ENCODE measurements at regions of chr17 and their contacts with region 1.

Region 1: DNA sequence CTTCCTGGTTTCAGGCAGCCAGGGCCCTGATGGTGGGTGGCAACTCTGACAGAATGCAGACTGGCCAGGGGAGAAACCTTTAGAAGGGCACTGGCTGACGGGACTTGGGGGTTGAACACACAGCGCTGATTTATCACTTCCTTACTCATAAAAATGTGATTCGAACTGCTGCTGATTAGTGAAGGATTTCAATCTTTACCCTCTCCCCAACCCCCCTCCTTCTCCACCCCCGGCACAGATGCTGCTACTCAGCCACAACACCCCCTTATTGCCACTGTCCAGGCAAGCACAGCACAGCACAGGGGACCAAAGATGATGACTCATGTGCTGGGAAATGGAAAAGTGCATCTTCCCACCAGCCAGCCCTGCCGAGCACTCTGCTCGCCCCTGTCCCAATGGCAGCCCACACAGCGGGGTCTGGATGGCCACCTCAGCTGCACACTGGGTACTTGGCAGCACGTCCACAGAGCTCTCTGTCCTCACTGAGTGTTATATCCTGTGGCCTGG is 70.1 kb downstream of the SMG6 start:
- DNase-seq: no peak
- ATAC-seq: no peak

Region 2: GRCh38 chr17:2064980-2065785 is 168.3 kb before region 1 on chr17:
- intact Hi-C with region 1: loop called in 1 of 2 experiments (anchors 5 kb)
- DNase-seq: peak in 1 of 2 donors; percentile 58
- ATAC-seq: peak; percentile 52

Region 3: DNA sequence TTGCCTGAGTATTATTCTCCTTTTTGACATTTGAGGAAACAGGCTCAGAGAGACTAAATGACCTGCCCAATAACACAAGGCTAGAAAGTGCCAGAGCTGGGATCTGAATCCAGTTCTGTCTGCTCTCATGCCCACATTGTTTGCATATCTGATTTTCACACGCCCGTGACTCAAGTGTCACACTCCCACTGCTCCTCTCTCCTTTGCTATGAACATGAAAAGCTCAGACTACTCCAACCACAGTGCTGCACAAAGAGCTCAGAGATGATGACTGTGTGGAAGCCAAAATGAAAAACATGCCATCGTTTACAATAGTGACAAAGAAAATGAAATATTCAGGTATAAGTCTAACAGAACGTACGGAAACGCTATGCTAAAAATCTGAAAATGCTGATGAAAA is 37.8 kb before region 1 on chr17:
- intact Hi-C with region 1: no loop called
- DNase-seq: no peak
- ATAC-seq: no peak

Measured in left colon (tissue), 2 donors.